ENCODE measurements at regions of chr1 and their contacts with region 1.

Region 1: GRCh38 chr1:37449936-37450335 is 24.4 kb upstream of the ZC3H12A start:
- DNase-seq: no peak
- H3K4me3 ChIP-seq: no peak overlapping the region
- H3K27ac ChIP-seq: no peak overlapping the region
- H3K4me1 ChIP-seq: no peaks in the 10 kb centered on the region
- H3K27me3 ChIP-seq: no peaks in the 10 kb centered on the region
- CTCF ChIP-seq: no peak
- POLR2A ChIP-seq: no peak

Region 2: DNA sequence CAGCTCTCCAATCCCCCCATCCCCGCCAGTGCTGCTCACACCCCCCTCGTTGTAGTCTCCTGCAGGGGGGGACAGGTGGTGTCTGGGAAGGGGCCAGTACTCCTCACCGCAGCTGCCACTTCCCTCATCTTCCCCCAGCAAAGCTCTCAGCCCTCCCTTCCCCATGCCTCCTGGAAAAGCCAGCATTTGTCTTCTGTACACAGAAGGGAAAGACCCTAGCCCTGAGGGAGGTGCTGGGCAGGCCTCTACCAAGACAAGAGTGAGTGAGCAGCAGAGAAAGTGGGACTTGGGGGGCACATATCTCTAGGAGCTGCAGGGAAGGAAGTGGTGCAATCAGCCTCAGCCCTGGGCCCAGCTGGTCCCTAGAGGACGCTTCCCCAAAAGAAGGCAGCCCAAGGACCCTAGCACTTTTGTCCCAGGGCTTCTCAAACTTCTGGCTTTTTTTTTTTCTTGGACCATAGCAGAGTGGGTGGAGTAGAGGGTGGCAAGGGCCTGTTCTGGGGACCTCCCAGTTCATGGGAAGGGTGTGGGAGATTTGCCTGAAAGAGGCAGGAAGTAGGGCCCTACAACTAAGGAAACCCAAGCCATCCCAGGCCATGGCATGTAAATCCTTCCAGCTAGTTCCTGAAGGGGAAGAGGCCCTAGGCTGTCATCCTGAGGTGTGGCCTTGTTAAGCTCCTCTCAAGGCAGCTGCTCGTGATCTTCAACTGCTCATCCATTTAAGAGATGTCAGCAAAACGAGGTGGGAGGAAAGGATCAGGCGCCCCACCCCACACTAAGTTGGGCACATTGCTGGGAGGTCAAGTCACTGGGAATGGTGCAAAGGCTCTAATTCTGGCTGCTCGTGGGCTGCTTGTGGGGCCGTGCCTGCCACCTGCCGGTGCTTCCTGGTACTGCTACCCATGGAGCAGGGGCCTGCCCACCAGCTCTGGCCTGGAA is 37.0 kb after region 1 on chr1:
- intact Hi-C with region 1: loop called (anchors 2 kb)
- DNase-seq: peak; percentile 65 to 69
- H3K4me3 ChIP-seq: no peak overlapping the region
- H3K27ac ChIP-seq: peak overlapping the region; percentile 5 to 65 (median 49)
- H3K4me1 ChIP-seq: peaks cover 7 to 24% of the 10 kb centered on the region in 2 donors
- H3K27me3 ChIP-seq: no peaks in the 10 kb centered on the region
- CTCF ChIP-seq: peak; percentile 84 to 99 (median 90)
- POLR2A ChIP-seq: no peak

Region 3: GRCh38 chr1:37682334-37682987 is 232.5 kb after region 1 on chr1:
- intact Hi-C with region 1: loop called (anchors 5 kb)
- DNase-seq: peak; percentile 65 to 69
- H3K4me3 ChIP-seq: no peak overlapping the region
- H3K27ac ChIP-seq: no peak overlapping the region
- H3K4me1 ChIP-seq: no peaks in the 10 kb centered on the region
- H3K27me3 ChIP-seq: no peaks in the 10 kb centered on the region
- CTCF ChIP-seq: peak; percentile 59 to 87 (median 78)
- POLR2A ChIP-seq: no peak

Measured in thyroid gland (tissue), 4 donors.